Activated CD4-positive, alpha-beta T cell treated with anti-CD3 and anti-CD28 coated beads, Interleukin-2, amount 10 ng/mL, durations not matched to agents 24 days and 14 days (primary cell): ENCODE measurements at regions of chr6 and their contacts with region 1.

Region 1: DNA sequence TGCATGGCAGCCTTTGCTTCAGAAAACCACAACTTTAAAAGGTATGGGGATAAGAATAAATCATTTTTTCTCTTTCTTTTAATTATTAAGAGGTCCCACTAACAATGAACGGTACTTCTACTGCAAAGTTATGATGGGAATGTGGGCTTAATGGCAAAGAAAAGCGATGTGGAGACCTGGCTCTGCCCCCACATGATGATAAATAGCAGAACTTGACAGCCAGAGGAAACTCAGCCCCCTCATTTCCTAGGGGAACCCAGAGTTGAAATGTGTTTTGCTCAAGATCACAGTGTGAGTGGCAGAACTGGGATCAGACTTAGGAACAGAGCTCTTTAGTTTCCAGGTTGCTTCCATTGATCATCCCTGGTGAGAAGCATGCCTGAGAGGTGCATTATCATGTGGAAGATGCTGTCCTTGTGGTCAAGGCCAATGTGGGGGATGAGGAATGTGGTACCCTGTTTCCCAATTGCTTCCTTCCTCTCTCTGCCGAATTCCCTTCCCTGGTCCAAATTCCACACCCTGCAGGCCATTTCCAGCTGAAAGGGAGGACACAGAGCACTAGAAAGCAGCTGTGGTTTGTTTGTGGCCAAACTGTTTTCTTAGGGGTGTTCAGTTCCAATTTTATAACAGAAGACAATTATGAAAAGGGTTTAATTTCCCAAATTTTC is 66.0 kb downstream of the BACH2 start:
- DNase-seq: no peak
- H3K4me3 Mint-ChIP-seq: peak overlapping the region; percentile 56
- H3K27ac Mint-ChIP-seq: peak overlapping the region; percentile 30
- H3K4me1 Mint-ChIP-seq: peaks cover 78% of the 10 kb centered on the region
- H3K27me3 Mint-ChIP-seq: no peaks in the 10 kb centered on the region

Region 2: DNA sequence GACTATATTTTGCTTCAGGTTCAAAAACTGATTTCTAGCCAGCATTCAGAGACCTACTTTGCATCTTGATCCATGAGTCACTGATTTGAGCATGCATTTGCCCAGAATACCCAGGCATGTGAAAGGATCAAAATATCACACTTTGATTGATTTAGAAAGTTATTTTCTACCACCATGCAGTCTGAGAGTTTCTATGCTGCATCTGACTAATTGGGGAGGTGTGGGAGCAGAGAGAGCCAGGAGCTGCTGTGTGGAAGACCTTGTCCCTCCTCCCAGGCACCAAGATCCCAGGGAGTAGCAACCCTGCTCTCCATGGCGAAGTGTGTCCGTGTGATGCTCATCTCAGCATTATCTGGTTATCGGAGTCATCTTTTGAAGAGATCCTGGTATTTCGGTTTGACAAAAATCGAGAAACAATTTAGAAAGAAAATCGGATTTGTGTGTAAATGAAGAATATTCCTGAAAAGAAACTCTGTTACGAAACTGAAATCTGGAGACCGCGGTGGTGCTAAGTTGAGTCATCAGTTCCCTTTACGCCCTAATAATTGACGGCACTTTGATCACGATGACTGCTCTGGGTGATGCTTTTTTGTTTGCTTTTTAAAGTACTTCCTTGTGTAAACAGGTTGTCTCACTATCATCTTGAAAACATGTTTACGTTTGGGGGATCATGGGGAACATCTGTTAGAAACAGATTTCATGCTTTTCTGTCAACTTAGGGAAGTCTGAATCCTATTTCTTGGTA is 127.5 kb before region 1 on chr6:
- intact Hi-C with region 1: loop called (anchors 5 kb)
- DNase-seq: peak; percentile 73
- H3K4me3 Mint-ChIP-seq: peak overlapping the region; percentile 64
- H3K27ac Mint-ChIP-seq: peak overlapping the region; percentile 88
- H3K4me1 Mint-ChIP-seq: peaks cover 60% of the 10 kb centered on the region
- H3K27me3 Mint-ChIP-seq: no peaks in the 10 kb centered on the region

Region 3: DNA sequence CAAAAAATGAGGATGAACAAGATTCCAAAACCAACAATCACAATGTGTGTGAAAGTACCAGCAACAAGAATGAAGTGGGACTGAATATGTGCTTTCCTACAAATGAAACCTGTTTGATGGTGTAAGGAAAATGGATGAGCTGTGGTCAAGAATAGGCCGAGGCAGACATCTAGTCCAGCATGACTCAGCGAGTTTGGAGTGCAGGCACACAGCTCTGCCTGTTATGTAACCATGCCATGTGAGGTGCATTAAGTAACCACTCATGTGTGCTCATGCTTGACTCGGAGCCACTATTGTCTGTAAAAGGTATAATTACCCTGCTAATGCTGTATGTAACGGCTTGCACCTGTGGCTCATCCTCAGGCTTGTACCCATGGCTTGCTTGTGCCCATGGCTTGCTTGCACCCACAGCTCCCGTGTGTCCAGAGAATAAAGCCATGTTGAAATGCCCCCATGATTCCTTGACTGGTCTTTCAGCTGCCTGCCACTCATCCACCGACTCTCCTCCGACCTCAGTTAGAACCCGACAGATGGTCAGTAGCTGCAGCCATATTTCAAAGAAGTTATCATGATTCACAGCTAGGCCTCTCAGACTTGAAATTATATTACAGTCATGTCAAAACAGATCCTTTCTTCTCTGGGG is 32.7 kb before region 1 on chr6:
- intact Hi-C with region 1: loop called (anchors 5 kb)
- DNase-seq: peak; percentile 58
- H3K4me3 Mint-ChIP-seq: no peak overlapping the region
- H3K27ac Mint-ChIP-seq: no peak overlapping the region
- H3K4me1 Mint-ChIP-seq: peaks cover 47% of the 10 kb centered on the region
- H3K27me3 Mint-ChIP-seq: no peaks in the 10 kb centered on the region